ENCODE measurements at regions of chr21 and their contacts with region 1.

Region 1: GRCh38 chr21:26170471-26171257 is at the start of gene APP:
- DNase-seq: peak; percentile 81 to 92 (median 90)
- H3K4me3 ChIP-seq: peak within 1 kb of the TSS; percentile 63
- H3K27ac ChIP-seq: peak within 1 kb of the TSS; percentile 56 to 65
- H3K4me1 ChIP-seq: no peaks in the 10 kb centered on the region
- H3K27me3 ChIP-seq: no peaks in the 10 kb centered on the region
- CTCF ChIP-seq: peak; percentile 81 to 99 (median 98)
- EP300 ChIP-seq: no peak
- POLR2A ChIP-seq: peak; percentile 74
- total RNA-seq, gene APP: 211 to 489 (median 345) TPM

Region 2: DNA sequence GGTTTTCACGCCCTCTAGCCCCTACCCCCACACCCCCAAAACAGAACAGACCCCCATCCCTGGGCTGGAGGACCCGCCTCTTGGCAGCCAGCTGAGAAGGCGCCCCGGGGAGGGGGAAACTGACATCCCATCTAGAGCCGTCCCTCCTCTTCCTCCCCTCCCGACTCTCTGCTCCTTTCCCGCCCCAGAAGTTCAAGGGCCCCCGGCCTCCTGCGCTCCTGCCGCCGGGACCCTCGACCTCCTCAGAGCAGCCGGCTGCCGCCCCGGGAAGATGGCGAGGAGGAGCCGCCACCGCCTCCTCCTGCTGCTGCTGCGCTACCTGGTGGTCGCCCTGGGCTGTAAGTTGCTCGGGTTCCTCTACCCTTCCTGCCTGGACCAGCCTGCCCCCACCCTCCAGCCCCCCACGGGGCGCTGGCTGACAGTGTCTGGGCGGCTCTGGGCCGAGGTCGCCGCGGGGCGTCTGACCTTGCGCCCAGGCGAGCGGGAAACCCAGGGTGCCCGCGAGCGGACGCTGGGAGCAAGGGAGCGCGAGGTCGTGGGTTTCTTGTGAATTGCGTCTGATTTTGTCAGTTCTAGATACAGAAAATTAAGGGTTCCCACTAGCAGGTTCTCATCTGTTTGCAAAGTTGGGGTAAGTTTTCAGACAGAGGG is 531.0 kb before region 1 on chr21:
- intact Hi-C with region 1: loop called in 1 of 4 experiments (anchors 10 kb)
- DNase-seq: peak; percentile 51 to 72 (median 71)
- H3K4me3 ChIP-seq: peak overlapping the region; percentile 63
- H3K27ac ChIP-seq: peak overlapping the region; percentile 93 to 94
- H3K4me1 ChIP-seq: peaks cover 5% of the 10 kb centered on the region
- H3K27me3 ChIP-seq: no peaks in the 10 kb centered on the region
- CTCF ChIP-seq: peak in 2 of 3 donors; percentile 35 to 44
- EP300 ChIP-seq: no peak
- POLR2A ChIP-seq: no peak

Region 3: DNA sequence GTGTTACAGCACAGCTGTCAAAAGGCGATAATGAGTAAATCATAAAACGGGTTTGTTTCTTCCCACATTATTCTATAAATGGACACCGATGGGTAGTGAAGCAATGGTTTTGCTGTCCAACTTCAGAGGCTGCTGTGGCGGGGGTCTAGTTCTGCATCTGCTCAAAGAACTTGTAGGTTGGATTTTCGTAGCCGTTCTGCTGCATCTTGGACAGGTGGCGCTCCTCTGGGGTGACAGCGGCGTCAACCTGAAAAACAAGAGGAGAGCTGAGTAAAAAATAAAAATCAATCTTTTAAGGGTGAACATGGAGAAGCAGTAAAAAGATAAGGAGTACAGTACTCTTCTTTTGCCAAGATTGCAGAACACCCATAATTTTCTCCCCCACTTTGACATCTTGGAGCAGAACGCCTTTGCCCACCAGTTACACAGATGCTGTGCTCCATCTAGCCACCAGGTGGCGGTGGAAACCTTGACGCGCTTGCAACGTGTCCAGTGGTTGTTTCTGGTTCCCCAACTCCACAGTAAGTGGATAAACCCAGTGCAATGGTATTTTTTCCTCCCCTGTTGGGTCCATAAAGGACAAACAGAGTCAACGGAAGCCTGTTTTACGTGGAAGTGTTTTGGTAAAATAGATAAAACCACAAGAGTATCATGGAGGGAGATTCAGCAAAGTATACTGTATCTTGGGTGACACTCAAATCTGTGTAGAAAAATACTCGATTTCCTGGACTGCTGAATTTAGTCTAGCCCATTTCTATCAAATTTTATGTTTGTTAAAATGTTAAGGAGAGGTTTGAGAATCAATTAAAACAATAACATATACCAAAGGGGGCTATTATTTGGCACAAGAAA is 288.9 kb before region 1 on chr21:
- intact Hi-C with region 1: loop called in 2 of 4 experiments (anchors 5 kb)
- DNase-seq: peak; percentile 39 to 81 (median 67)
- H3K4me3 ChIP-seq: no peak overlapping the region
- H3K27ac ChIP-seq: no peak overlapping the region
- H3K4me1 ChIP-seq: peaks cover 1% of the 10 kb centered on the region
- H3K27me3 ChIP-seq: no peaks in the 10 kb centered on the region
- CTCF ChIP-seq: peak; percentile 59 to 71 (median 61)
- EP300 ChIP-seq: no peak
- POLR2A ChIP-seq: no peak

Region 4: GRCh38 chr21:25887166-25887565 is 283.5 kb before region 1 on chr21:
- intact Hi-C with region 1: loop called in 2 of 4 experiments (anchors 5 kb)
- DNase-seq: no peak
- H3K4me3 ChIP-seq: no peak overlapping the region
- H3K27ac ChIP-seq: no peak overlapping the region
- H3K4me1 ChIP-seq: peaks cover 3% of the 10 kb centered on the region
- H3K27me3 ChIP-seq: no peaks in the 10 kb centered on the region
- CTCF ChIP-seq: no peak
- EP300 ChIP-seq: no peak
- POLR2A ChIP-seq: no peak

Region 5: DNA sequence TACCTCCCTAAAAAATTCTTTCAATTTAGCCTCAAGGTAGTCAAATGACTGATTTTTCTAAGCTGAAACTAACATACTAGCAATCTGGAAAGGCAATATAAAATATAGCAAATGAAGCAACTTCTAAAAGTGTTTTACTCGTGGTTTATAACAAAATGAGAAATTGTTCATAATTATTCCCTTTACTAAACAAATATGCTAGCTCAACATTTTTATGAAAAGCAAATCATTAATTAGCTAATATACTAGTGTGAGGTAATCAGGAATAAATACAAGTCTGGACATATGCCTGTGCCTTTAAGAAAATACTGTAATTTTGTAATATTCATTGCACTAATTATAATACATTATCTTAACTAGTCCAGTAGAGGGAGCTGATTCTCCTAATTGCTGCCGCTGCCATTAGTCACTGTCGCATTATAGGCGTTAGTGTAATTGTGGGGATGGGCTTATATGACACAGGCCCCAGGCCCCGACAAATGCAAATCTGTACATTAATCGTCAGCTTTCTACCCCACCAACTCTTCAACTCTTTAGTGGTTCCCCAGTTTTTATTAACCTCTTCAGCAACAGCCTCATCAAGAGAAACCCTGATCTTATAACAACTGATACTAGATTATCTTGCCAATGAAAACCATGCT is 275.0 kb before region 1 on chr21:
- intact Hi-C with region 1: loop called in 3 of 4 experiments (anchors 2 to 5 kb)
- DNase-seq: peak in 1 of 5 donors; percentile 33
- H3K4me3 ChIP-seq: no peak overlapping the region
- H3K27ac ChIP-seq: no peak overlapping the region
- H3K4me1 ChIP-seq: peaks cover 3% of the 10 kb centered on the region
- H3K27me3 ChIP-seq: no peaks in the 10 kb centered on the region
- CTCF ChIP-seq: peak; percentile 35 to 62 (median 53)
- EP300 ChIP-seq: no peak
- POLR2A ChIP-seq: no peak

Measured in ovary (tissue), 10 donors.